SK-N-SH (cell line): ENCODE measurements at regions of chr9 and their contacts with region 1.

Region 1: GRCh38 chr9:97632985-97633858 is at the starts of genes NCBP1 and TSTD2:
- DNase-seq: peak; percentile 94
- H3K4me3 ChIP-seq: peak within 1 kb of the TSS; percentile 92 to 99
- H3K27ac ChIP-seq: peak within 1 kb of the TSS; percentile 99 to 100
- H3K4me1 ChIP-seq: peaks cover 19 to 20% of the 10 kb centered on the region in 2 experiments; a peak in 3 of 4 replicates
- H3K27me3 ChIP-seq: no peaks in the 10 kb centered on the region
- CTCF ChIP-seq: no peak
- EP300 ChIP-seq: no peak
- RAD21 ChIP-seq: no peak
- polyA plus RNA-seq, gene NCBP1: 11.3 and 15.6 TPM in 2 replicates
- polyA plus RNA-seq, gene TSTD2: 11.5 and 18.6 TPM in 2 replicates

Region 2: DNA sequence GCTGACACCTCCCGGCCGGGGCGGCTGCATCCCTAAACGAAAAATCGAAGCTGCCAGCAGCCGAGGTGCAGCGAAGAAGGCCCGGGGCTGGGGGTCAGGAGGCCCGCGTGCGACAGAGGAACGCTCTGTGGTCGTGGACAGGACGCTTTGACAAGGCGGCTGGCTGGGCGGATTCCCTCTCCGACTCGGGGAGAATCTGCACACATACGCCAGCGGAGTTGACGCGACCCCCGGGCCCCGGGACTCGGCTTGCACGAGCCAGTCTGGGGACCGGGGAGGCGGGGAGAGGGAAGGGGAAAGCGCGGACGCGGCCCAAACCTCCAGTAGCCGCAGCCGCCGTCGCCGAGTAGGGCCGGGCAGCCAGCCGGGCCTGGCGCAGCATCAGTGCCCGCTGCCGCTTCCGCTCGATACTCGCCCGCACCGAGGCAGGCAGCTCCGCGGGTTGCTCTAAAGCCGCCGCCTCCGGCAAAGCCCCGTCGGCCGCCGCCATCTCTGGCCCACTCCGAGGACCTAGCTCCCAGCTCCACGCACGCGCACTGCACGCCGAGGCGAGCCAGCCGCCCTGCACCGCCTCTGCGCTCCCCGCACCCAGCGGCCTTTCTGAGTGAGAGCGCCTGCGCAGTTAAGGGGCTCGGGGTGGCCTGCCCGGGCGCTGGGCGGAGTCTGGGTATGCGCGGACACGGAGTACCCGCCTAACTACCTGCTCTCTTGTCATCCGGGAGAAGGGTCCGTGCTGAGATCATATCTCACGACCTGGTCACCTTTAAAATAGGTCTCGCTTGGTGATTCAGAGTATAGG is 63.8 kb after region 1 on chr9 and contains the start of gene XPA:
- CTCF ChIA-PET with region 1: no interaction called
- POLR2A ChIA-PET with region 1: interaction called, 10 read pairs
- DNase-seq: peak; percentile 99
- H3K4me3 ChIP-seq: peak within 1 kb of the TSS; percentile 82 to 95
- H3K27ac ChIP-seq: peak within 1 kb of the TSS; percentile 73 to 93
- H3K4me1 ChIP-seq: peaks cover 7 to 19% of the 10 kb centered on the region in 2 experiments; a peak in 3 of 4 replicates
- H3K27me3 ChIP-seq: no peaks in the 10 kb centered on the region
- CTCF ChIP-seq: no peak
- EP300 ChIP-seq: no peak
- RAD21 ChIP-seq: no peak
- polyA plus RNA-seq, gene XPA: 3.2 and 3.3 TPM in 2 replicates

Region 3: DNA sequence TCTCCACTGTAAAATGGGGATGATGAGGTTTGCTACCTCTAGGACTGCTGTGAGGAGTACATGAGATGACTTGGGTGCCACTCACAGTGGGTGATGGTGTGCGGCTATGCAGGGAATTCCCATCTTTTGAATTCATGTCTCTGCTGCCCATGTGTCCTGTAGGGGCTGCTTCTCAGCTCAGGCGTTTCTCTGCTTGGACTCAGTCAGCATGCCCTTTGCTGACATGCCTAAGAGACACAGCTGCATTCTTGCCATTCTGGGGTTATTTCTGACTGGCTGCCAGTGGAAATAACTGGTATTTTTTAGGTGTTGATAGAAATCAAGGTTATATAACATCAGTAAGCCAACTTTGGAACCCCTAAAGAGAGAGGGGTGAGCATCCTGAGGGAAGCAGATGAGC is 88.2 kb after region 1 on chr9:
- CTCF ChIA-PET with region 1: no interaction called
- POLR2A ChIA-PET with region 1: no interaction called
- DNase-seq: no peak
- H3K4me3 ChIP-seq: no peak overlapping the region
- H3K27ac ChIP-seq: no peak overlapping the region
- H3K4me1 ChIP-seq: no peaks in the 10 kb centered on the region
- H3K27me3 ChIP-seq: peaks cover 12% of the 10 kb centered on the region
- CTCF ChIP-seq: no peak
- EP300 ChIP-seq: no peak
- RAD21 ChIP-seq: no peak